Caco-2 (cell line): ENCODE measurements at regions of chr4 and their contacts with region 1.

Region 1: GRCh38 chr4:151957153-151957552 is 196.3 kb upstream of the GATB start:
- DNase-seq: peak; percentile 90 to 96
- H3K4me3 ChIP-seq: no peak overlapping the region
- H3K4me3 Mint-ChIP-seq: peak overlapping the region; percentile 42
- H3K27ac Mint-ChIP-seq: peak overlapping the region; percentile 78
- H3K4me1 ChIP-seq: peaks cover 29% of the 10 kb centered on the region
- H3K4me1 Mint-ChIP-seq: peaks cover 29% of the 10 kb centered on the region
- H3K27me3 ChIP-seq: no peaks in the 10 kb centered on the region
- H3K27me3 Mint-ChIP-seq: no peaks in the 10 kb centered on the region
- CTCF ChIP-seq: peak; percentile 49 to 53

Region 2: GRCh38 chr4:151489462-151490203 is 467.5 kb before region 1 on chr4:
- CTCF ChIA-PET with region 1: no interaction called
- POLR2A ChIA-PET with region 1: no interaction called
- intact Hi-C with region 1: no loop called
- DNase-seq: no peak
- H3K4me3 ChIP-seq: no peak overlapping the region
- H3K4me3 Mint-ChIP-seq: no peak overlapping the region
- H3K27ac Mint-ChIP-seq: no peak overlapping the region
- H3K4me1 ChIP-seq: 0 out of 2 replicates have a peak, but pooled peaks cover 4% of the 10 kb centered on the region
- H3K4me1 Mint-ChIP-seq: peaks cover 3% of the 10 kb centered on the region
- H3K27me3 ChIP-seq: no peaks in the 10 kb centered on the region
- H3K27me3 Mint-ChIP-seq: no peaks in the 10 kb centered on the region
- CTCF ChIP-seq: no peak

Region 3: GRCh38 chr4:151760712-151761527 is 196.2 kb before region 1 on chr4 and contains the start of gene GATB:
- CTCF ChIA-PET with region 1: no interaction called
- POLR2A ChIA-PET with region 1: no interaction called
- intact Hi-C with region 1: loop called (anchors 1 kb)
- DNase-seq: peak; percentile 93 to 96
- H3K4me3 ChIP-seq: peak within 1 kb of the TSS; percentile 94
- H3K4me3 Mint-ChIP-seq: peak within 1 kb of the TSS; percentile 98
- H3K27ac Mint-ChIP-seq: peak within 1 kb of the TSS; percentile 100
- H3K4me1 ChIP-seq: peaks cover 5% of the 10 kb centered on the region; the same call in 1 of the 2 replicates
- H3K4me1 Mint-ChIP-seq: peaks cover 9% of the 10 kb centered on the region
- H3K27me3 ChIP-seq: no peaks in the 10 kb centered on the region
- H3K27me3 Mint-ChIP-seq: peaks cover 8% of the 10 kb centered on the region
- CTCF ChIP-seq: peak; percentile 64 to 70
- total RNA-seq, gene GATB: 20.6 and 29.6 TPM in 2 replicates

Region 4: DNA sequence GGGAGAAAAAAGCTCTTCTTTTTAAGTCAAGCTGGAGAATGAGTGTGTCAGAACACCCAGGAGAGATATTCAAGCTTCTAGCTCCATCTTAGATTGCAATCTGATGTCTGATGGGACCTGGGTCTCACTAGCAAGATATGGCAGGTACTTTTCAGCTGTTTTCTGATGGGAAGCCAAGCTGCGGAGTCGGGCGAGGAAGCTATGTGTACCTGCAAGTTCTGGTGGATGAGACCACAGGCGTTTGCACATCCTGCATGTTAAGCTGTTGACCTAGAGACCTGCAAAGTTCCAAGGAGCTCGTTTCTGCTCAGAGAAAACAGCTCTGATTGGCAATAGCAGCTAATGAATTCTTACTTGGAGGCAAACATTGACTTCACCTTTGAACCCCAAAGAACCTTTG is 29.0 kb before region 1 on chr4:
- CTCF ChIA-PET with region 1: interaction called, 6 read pairs
- POLR2A ChIA-PET with region 1: no interaction called
- intact Hi-C with region 1: loop called (anchors 1 kb)
- DNase-seq: peak; percentile 31 to 48
- H3K4me3 ChIP-seq: no peak overlapping the region
- H3K4me3 Mint-ChIP-seq: no peak overlapping the region
- H3K27ac Mint-ChIP-seq: no peak overlapping the region
- H3K4me1 ChIP-seq: peaks cover 15% of the 10 kb centered on the region
- H3K4me1 Mint-ChIP-seq: peaks cover 6% of the 10 kb centered on the region
- H3K27me3 ChIP-seq: no peaks in the 10 kb centered on the region
- H3K27me3 Mint-ChIP-seq: no peaks in the 10 kb centered on the region
- CTCF ChIP-seq: no peak

Region 5: DNA sequence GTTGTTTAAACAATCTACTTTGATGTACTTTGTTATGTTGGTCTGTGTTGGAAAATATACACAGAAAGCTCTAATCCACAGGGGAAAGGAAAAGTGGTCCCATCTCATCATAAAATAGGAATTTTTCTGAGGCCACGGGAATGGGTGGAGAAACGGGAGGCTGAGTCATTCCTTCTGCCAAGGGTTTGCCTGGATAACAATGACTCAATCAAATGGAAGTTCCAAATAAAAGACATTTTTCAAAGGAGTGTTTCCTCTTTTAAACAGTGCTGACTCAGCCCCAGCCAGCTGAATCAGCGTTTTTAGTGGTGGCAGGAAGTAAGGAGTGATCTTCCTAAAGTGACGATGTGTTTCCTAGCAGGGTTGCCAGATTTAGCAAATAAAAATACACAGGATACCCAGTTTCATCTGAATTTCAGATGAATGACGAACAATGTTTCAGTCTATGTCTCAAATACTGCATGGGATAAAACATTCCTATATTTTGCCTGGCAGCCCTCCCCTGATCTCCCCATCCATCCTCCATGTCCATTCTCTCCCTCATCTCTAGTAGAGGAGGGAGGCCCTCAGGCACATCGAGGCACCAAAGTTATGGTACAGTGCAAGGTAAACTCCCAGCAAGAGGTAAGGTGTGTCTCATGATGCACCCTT is 149.1 kb after region 1 on chr4:
- CTCF ChIA-PET with region 1: no interaction called
- POLR2A ChIA-PET with region 1: no interaction called
- intact Hi-C with region 1: loop called (anchors 2 kb)
- DNase-seq: peak; percentile 13 to 51
- H3K4me3 ChIP-seq: no peak overlapping the region
- H3K4me3 Mint-ChIP-seq: no peak overlapping the region
- H3K27ac Mint-ChIP-seq: no peak overlapping the region
- H3K4me1 ChIP-seq: peaks cover 48% of the 10 kb centered on the region
- H3K4me1 Mint-ChIP-seq: peaks cover 30% of the 10 kb centered on the region
- H3K27me3 ChIP-seq: no peaks in the 10 kb centered on the region
- H3K27me3 Mint-ChIP-seq: no peaks in the 10 kb centered on the region
- CTCF ChIP-seq: no peak